AG04449 (cell line): ENCODE measurements at regions of chr16 and their contacts with region 1.

Region 1: DNA sequence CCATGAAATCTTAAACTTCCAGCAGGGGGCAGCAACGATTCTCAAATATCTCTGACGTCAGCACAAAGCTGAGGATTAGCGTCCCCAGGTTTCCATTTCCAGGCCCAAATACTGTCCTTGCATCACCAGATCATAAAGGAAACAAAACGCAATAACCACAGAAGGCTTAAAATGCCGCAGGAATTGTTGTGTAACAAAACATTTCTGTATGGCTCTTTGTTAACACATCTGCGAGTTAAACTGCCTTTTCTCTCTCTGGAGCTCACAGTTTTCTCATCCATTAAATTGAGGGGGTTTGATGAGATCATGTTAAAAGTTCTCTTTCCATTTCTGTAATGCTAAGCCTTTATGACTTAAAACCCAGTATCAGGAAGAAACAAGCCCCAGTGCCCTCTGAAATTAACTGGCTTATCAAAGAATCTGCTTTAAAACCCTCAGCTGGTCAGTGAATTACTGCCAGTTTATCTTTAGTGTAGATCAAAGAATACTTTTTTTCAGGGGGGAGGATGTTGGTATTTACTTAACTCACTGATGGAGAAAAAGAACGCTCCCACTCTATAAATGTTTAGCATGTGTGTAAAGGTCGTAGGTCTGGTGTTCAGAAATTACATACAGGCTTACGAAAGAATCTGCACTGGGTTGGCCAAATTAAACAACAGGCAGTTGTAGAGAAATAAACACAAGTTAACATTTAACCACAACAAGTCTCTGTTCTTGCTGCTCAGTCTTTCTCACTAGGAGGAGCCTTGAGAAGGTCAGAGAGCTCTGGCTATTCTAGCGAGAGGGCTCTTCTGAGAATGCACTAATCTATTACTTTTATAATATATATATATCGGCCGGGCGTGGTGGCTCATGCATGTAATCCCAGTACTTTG is 10.6 kb upstream of the TERF2 start:
- DNase-seq: peak; percentile 86
- H3K4me3 ChIP-seq: peak overlapping the region; percentile 6
- CTCF ChIP-seq: peak; percentile 30

Region 2: DNA sequence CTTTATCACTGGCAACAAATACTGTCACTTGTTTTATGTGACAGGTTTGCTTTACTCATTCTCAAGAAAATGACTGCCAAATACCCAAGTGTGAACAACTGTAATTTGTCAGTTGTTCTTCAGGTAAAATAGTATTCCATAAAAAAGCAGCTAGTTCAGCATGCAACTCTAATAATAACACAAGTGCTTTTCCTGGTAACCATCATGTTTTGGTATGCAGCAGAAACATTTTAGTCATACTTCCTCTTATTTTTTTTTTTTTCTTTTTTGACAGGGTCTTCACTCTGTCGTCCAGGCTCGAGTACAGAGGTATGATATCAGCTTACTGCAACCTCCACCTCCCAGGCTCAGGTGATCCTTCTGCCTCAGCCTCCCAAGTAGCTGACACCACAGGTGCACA is 15.2 kb before region 1 on chr16:
- CTCF ChIA-PET with region 1: interaction called, 29 read pairs
- POLR2A ChIA-PET with region 1: interaction called, 3 read pairs
- DNase-seq: no peak
- H3K4me3 ChIP-seq: no peak overlapping the region
- CTCF ChIP-seq: no peak

Region 3: DNA sequence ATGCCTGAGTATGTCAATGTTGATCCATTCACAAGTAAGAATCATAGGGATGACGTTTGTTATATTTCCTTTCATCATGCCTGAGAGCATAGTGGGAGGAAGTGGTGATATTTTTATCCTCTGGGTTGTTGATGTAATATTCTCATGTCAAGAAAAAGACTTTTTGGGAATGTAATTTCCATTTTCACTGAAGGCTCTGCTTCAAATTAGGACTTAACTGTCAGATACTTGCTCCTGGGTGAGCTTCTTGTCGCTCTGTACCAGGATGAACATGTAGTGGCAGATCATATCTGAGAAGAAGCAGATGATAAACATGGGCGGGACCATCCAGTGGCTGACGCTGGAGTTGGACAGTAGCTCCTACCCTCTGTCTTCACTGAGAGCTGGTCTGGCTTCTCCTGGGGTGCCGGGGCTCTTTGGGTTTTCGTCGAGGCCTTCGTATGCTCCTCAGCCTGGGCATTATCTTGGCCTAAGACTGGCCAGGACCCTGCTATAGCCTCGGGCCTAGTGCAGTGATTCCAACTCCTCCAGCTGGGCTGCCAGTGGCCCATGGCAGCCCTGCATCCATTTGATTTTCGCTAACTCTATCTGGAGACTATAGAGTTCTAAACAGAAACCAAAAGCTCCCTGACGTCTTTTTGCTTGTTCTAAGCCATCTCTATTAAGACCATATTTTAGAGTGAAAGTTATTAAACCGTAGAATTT is 47.7 kb after region 1 on chr16:
- CTCF ChIA-PET with region 1: interaction called, 13 read pairs
- POLR2A ChIA-PET with region 1: no interaction called
- DNase-seq: no peak
- H3K4me3 ChIP-seq: peak overlapping the region; percentile 12
- CTCF ChIP-seq: no peak

Region 4: DNA sequence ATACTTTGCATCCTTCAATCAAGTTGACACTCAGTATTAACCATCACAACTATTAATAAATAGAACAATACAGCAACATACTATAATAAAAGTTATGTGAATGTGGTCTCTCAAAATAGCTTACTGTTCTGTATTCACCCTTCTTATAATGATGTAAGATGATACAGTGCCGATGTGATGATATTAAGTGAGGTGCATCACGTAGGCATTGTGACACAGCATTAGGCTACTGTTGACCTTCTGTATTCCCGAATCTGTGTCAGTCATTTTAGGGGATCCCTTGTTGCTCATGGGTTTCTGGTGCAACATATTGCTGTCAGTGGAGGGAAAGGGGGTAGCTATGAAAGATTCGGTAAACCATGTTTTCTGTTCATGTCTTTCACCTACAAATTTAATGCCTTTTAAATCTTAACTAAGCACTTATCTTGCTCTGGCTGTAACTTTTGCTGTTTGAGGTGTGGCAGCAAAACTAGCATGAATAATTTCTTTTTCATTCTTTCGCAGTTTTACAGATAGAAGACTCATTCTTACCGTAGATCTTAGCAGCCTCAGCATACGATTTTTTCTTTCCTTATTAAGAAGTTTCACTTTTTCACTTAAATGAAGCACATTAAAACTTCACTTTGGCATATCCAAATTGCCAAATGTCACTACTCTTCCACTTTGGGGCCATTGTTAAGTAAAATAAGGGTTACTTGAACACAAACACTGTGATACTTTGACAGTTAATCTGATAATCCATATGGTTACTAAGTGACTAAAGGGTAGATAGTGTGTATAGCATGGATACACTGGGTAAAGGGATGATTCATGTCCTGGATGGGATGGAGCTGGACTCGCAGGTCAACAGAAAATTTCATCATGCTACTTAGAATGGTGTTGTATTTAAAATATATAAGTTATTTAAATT is 199.0 kb after region 1 on chr16:
- CTCF ChIA-PET with region 1: interaction called, 15 read pairs
- POLR2A ChIA-PET with region 1: no interaction called
- DNase-seq: no peak
- H3K4me3 ChIP-seq: no peak overlapping the region
- CTCF ChIP-seq: no peak

Region 5: GRCh38 chr16:69709456-69710084 is 313.1 kb after region 1 on chr16:
- CTCF ChIA-PET with region 1: interaction called, 27 read pairs
- POLR2A ChIA-PET with region 1: no interaction called
- DNase-seq: no peak
- H3K4me3 ChIP-seq: no peak overlapping the region
- CTCF ChIP-seq: peak; percentile 39